MCF 10A (cell line): ENCODE measurements at regions of chr9 and their contacts with region 1.

Region 1: DNA sequence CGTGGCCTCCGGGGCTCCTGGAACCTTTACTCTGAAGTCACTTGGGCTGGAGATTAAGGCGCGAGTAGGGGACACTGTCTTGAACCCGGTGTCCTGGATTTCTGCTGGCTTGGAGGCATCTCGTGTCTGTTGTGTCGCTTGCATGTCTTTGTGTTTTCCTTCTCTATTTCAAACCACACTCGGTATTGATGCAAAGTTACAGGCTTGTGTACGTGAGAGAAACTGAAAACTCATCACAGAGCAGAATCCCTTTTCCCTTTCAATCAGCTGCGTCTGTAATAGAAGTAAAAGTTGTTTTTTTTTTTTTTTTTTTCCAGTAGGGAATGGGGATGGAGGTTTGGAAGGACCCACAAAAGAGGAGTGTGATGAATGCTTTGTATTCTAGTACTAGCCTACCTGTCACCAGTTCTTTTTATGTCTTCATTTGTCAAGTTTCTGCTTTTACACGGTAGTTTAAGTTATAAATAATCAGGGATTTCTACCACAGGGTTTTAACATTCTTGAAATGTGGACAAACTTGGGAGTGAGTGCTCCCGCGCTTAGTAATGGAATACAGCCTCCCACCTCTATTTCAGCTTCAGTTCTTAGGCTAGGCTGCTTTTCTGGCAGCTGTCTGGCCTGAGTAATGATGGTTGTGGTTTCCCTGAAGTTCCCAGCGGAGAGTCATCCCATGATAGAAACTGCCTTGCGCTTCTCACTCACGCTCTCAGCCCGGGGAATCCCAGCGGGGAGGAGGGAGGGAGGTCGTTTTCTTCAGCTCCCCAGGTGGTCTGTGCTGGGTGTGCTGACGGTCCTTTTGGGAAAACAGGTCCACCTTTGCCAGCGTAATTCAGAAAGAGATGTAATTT is 763 bp downstream of the TJP2 start:
- DNase-seq: peak; percentile 96
- H3K4me3 Mint-ChIP-seq: peak overlapping the region; percentile 93
- H3K27ac Mint-ChIP-seq: peak overlapping the region; percentile 94
- H3K4me1 Mint-ChIP-seq: peaks cover 44% of the 10 kb centered on the region
- H3K27me3 Mint-ChIP-seq: no peaks in the 10 kb centered on the region
- CTCF ChIP-seq: no peak

Region 2: GRCh38 chr9:69035438-69036308 is 139.2 kb before region 1 on chr9 and contains the start of gene FXN:
- CTCF ChIA-PET with region 1: interaction called, 7 read pairs
- POLR2A ChIA-PET with region 1: interaction called, 11 read pairs
- intact Hi-C with region 1: no loop called
- DNase-seq: peak; percentile 78
- H3K4me3 Mint-ChIP-seq: peak within 1 kb of the TSS; percentile 94
- H3K27ac Mint-ChIP-seq: peak within 1 kb of the TSS; percentile 92
- H3K4me1 Mint-ChIP-seq: peaks cover 6% of the 10 kb centered on the region
- H3K27me3 Mint-ChIP-seq: no peaks in the 10 kb centered on the region
- CTCF ChIP-seq: peak; percentile 91
- total RNA-seq, gene FXN: 18.4 and 31.6 TPM in 2 replicates

Region 3: DNA sequence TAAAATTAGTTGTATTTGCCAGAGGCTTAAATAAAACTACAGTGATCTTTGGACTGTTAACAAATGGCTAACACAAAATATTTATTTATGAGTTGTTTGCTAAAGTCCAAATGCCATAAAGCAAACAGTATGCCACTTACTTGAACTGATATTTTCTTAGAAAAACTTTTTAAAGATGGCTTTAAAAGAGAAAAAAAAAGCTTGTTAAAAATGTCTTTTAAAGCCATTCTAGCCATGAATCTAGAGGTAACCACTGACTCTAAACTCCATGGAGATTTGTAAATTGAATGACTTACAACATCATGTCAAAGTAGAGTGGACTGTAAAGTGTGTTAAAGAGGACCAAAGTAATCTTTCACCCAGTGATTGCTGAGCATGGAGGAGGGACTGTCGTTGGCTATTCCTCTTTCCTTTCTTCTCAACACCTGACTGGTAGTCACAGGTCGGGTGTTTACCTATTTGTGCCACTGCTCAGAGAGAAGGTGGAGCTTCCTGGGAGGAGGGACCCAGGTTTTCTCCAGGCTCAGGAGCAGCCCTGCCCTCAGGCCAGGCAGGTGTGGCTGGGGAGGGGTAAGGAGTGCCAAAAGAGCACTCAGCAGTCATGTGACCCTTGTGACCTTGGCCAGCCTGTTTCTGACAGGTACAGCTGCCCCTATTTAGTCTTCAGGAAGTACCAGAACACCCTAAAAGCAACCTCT is 69.9 kb before region 1 on chr9:
- CTCF ChIA-PET with region 1: no interaction called
- POLR2A ChIA-PET with region 1: interaction called, 31 read pairs
- intact Hi-C with region 1: no loop called
- DNase-seq: peak; percentile 73
- H3K4me3 Mint-ChIP-seq: no peak overlapping the region
- H3K27ac Mint-ChIP-seq: peak overlapping the region; percentile 61
- H3K4me1 Mint-ChIP-seq: no peaks in the 10 kb centered on the region
- H3K27me3 Mint-ChIP-seq: no peaks in the 10 kb centered on the region
- CTCF ChIP-seq: no peak

Region 4: GRCh38 chr9:69145144-69145715 is 29.6 kb before region 1 on chr9:
- CTCF ChIA-PET with region 1: interaction called, 4 read pairs
- POLR2A ChIA-PET with region 1: interaction called, 10 read pairs
- intact Hi-C with region 1: no loop called
- DNase-seq: no peak
- H3K4me3 Mint-ChIP-seq: no peak overlapping the region
- H3K27ac Mint-ChIP-seq: no peak overlapping the region
- H3K4me1 Mint-ChIP-seq: peaks cover 7% of the 10 kb centered on the region
- H3K27me3 Mint-ChIP-seq: no peaks in the 10 kb centered on the region
- CTCF ChIP-seq: no peak

Region 5: GRCh38 chr9:69186841-69187611 is 12.2 kb after region 1 on chr9:
- CTCF ChIA-PET with region 1: interaction called, 81 read pairs
- POLR2A ChIA-PET with region 1: interaction called, 61 read pairs
- intact Hi-C with region 1: no loop called
- DNase-seq: peak; percentile 53
- H3K4me3 Mint-ChIP-seq: no peak overlapping the region
- H3K27ac Mint-ChIP-seq: peak overlapping the region; percentile 62
- H3K4me1 Mint-ChIP-seq: peaks cover 25% of the 10 kb centered on the region
- H3K27me3 Mint-ChIP-seq: no peaks in the 10 kb centered on the region
- CTCF ChIP-seq: no peak

Region 6: DNA sequence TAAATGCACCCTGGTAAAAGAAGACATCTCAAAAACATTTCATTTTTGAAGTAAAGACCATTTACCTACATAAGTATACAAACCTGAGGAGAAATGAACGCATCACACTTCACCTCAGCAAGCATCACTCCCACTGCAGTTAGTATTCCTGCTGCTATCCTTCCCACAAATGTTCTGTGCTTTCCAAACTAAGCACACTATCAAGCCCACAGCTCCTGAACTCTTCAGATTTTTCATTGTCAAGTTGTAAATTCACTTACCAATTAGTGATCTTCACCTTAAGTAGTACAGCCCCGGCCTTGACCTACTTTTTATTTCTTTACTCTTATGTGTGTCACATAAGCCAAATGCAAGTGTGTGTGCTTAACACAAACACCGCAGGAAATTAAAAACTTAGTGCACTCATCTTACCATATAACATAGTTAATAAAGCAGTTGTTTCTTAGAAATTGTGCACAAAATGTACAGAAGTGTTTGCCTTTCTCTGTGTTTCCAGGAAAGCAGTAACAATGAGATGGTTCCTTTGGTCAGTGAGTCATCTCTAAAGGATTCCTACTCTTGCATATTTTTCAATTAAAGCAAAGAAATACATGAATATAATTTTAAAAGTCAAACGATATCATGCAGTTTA is 327.9 kb after region 1 on chr9:
- CTCF ChIA-PET with region 1: no interaction called
- POLR2A ChIA-PET with region 1: no interaction called
- intact Hi-C with region 1: no loop called
- DNase-seq: peak; percentile 23
- H3K4me3 Mint-ChIP-seq: no peak overlapping the region
- H3K27ac Mint-ChIP-seq: no peak overlapping the region
- H3K4me1 Mint-ChIP-seq: peaks cover 12% of the 10 kb centered on the region
- H3K27me3 Mint-ChIP-seq: no peaks in the 10 kb centered on the region
- CTCF ChIP-seq: no peak